ENCODE measurements at regions of chr2 and their contacts with region 1.

Region 1: DNA sequence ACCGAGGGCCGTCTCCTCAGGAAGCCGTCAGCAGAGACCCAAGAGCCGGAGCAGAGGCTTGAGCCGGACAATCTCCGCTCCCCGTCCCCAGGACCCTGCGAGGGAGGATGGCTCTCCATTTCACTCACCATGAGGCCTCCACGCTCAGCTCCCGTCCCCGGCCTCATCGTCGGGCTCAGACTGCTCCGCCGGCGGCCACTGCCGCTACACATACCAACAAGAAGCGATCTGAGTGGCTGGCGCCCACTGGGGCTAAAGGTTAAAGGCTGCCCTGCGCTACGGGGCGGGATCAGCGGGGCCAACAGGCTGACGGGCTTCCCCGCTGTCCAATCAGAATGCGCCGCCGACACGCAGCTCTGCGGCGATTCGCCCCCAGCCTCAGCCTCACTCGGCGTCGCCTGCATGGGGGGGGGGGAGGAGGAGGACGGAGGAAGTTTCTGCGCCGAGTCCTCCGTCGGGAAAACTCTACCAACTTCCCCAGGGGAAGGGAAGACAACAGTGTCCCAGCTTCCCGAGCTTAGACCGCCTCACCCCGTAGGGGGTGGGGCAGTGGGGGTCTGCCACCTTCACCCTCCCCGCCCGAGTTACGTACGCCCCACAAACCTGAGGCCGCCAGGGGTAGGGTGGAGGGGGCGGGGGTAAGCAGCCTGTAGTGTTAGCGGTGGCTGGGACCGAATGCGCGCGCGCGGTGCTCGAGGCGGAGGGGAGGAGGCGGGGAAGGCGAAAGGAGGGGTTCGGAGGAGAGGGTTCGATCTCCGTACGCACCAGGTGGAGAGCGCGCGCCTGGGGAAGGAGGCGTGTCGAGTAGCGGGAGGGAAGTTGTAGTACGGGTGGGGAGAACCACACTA is at the start of gene PRPF40A:
- DNase-seq: peak; percentile 99
- ATAC-seq: peak; percentile 74
- H3K4me3 ChIP-seq: peak within 1 kb of the TSS; percentile 72 to 97 (median 93)
- H3K4me3 Mint-ChIP-seq: peak within 1 kb of the TSS; percentile 94
- H3K27ac ChIP-seq: peak within 1 kb of the TSS; percentile 94 to 96
- H3K27ac Mint-ChIP-seq: peak within 1 kb of the TSS; percentile 95
- H3K4me1 ChIP-seq: peaks cover 26 to 30% of the 10 kb centered on the region in 2 donors
- H3K4me1 Mint-ChIP-seq: peaks cover 46% of the 10 kb centered on the region
- H3K27me3 ChIP-seq: no peaks in the 10 kb centered on the region
- H3K27me3 Mint-ChIP-seq: no peaks in the 10 kb centered on the region
- CTCF ChIP-seq: no peak
- total RNA-seq, gene PRPF40A: 115 and 121 TPM in 2 replicates

Region 2: GRCh38 chr2:151771599-151772358 is 945.7 kb before region 1 on chr2:
- CTCF ChIA-PET with region 1: no interaction called
- POLR2A ChIA-PET with region 1: no interaction called
- intact Hi-C with region 1: loop called (anchors 5 kb)
- DNase-seq: peak; percentile 93
- ATAC-seq: peak; percentile 90
- H3K4me3 ChIP-seq: peak overlapping the region in 1 of 5 experiments; percentile 38
- H3K4me3 Mint-ChIP-seq: peak overlapping the region; percentile 76
- H3K27ac ChIP-seq: peak overlapping the region; percentile 95 to 96
- H3K27ac Mint-ChIP-seq: peak overlapping the region; percentile 93
- H3K4me1 ChIP-seq: peaks cover 78 to 80% of the 10 kb centered on the region in 2 donors
- H3K4me1 Mint-ChIP-seq: peaks cover 90% of the 10 kb centered on the region
- H3K27me3 ChIP-seq: no peaks in the 10 kb centered on the region
- H3K27me3 Mint-ChIP-seq: no peaks in the 10 kb centered on the region
- CTCF ChIP-seq: no peak

Region 3: GRCh38 chr2:151833984-151834383 is 883.5 kb before region 1 on chr2:
- CTCF ChIA-PET with region 1: no interaction called
- POLR2A ChIA-PET with region 1: interaction called, 12 read pairs
- intact Hi-C with region 1: no loop called
- DNase-seq: peak; percentile 29
- ATAC-seq: no peak
- H3K4me3 ChIP-seq: no peak overlapping the region
- H3K4me3 Mint-ChIP-seq: no peak overlapping the region
- H3K27ac ChIP-seq: no peak overlapping the region
- H3K27ac Mint-ChIP-seq: no peak overlapping the region
- H3K4me1 ChIP-seq: peaks cover 1 to 21% of the 10 kb centered on the region in 2 donors
- H3K4me1 Mint-ChIP-seq: peaks cover 18% of the 10 kb centered on the region
- H3K27me3 ChIP-seq: no peaks in the 10 kb centered on the region
- H3K27me3 Mint-ChIP-seq: no peaks in the 10 kb centered on the region
- CTCF ChIP-seq: no peak

Region 4: GRCh38 chr2:152335010-152335725 is 382.3 kb before region 1 on chr2 and contains the start of gene FMNL2:
- CTCF ChIA-PET with region 1: no interaction called
- POLR2A ChIA-PET with region 1: interaction called, 3 read pairs
- intact Hi-C with region 1: loop called (anchors 10 kb)
- DNase-seq: peak; percentile 75
- ATAC-seq: peak; percentile 88
- H3K4me3 ChIP-seq: peak within 1 kb of the TSS; percentile 51 to 78 (median 64)
- H3K4me3 Mint-ChIP-seq: peak within 1 kb of the TSS; percentile 93
- H3K27ac ChIP-seq: no peak within 1 kb of the TSS
- H3K27ac Mint-ChIP-seq: peak within 1 kb of the TSS; percentile 79
- H3K4me1 ChIP-seq: peaks cover 10 to 12% of the 10 kb centered on the region in 2 donors
- H3K4me1 Mint-ChIP-seq: peaks cover 17% of the 10 kb centered on the region
- H3K27me3 ChIP-seq: peaks cover 0 to 16% (median 5%) of the 10 kb centered on the region in 4 experiments
- H3K27me3 Mint-ChIP-seq: peaks cover 13% of the 10 kb centered on the region
- CTCF ChIP-seq: no peak
- total RNA-seq, gene FMNL2: 8.4 and 8.8 TPM in 2 replicates

Region 5: GRCh38 chr2:152694161-152694661 is 23.2 kb before region 1 on chr2:
- CTCF ChIA-PET with region 1: no interaction called
- POLR2A ChIA-PET with region 1: no interaction called
- intact Hi-C with region 1: loop called (anchors 2 kb)
- DNase-seq: peak; percentile 29
- ATAC-seq: peak; percentile 31
- H3K4me3 ChIP-seq: peak overlapping the region in 2 of 5 experiments; percentile 6 to 18
- H3K4me3 Mint-ChIP-seq: peak overlapping the region; percentile 40
- H3K27ac ChIP-seq: peak overlapping the region; percentile 14 to 60
- H3K27ac Mint-ChIP-seq: peak overlapping the region; percentile 78
- H3K4me1 ChIP-seq: peaks cover 3 to 15% of the 10 kb centered on the region in 2 donors
- H3K4me1 Mint-ChIP-seq: peaks cover 24% of the 10 kb centered on the region
- H3K27me3 ChIP-seq: no peaks in the 10 kb centered on the region
- H3K27me3 Mint-ChIP-seq: no peaks in the 10 kb centered on the region
- CTCF ChIP-seq: no peak

Region 6: DNA sequence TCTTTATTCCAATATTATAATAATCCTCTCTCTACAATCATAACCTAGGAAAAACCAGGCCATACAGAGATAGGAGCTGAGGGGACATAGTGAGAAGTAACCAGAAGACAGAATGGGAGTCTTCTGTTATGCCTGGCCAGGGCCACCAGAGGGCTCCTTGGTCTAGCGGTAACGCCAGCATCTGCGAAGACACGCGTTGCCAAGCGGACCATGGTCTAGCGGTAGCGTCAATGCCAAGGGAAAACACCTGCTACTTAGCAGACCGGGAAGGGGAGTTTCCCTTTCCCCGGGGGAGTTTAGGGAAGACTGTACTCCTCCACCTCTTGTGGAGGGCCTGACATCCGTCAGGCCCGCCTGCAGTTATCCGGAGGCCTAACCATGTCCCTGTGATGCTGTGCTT is 37.6 kb after region 1 on chr2:
- CTCF ChIA-PET with region 1: no interaction called
- POLR2A ChIA-PET with region 1: no interaction called
- intact Hi-C with region 1: no loop called
- DNase-seq: peak; percentile 46
- ATAC-seq: no peak
- H3K4me3 ChIP-seq: no peak overlapping the region
- H3K4me3 Mint-ChIP-seq: no peak overlapping the region
- H3K27ac ChIP-seq: no peak overlapping the region
- H3K27ac Mint-ChIP-seq: no peak overlapping the region
- H3K4me1 ChIP-seq: no peaks in the 10 kb centered on the region
- H3K4me1 Mint-ChIP-seq: no peaks in the 10 kb centered on the region
- H3K27me3 ChIP-seq: no peaks in the 10 kb centered on the region
- H3K27me3 Mint-ChIP-seq: no peaks in the 10 kb centered on the region
- CTCF ChIP-seq: peak; percentile 27

Measured in B cell (primary cell).